ENCODE measurements at regions of chr11 and their contacts with region 1.

Region 1: DNA sequence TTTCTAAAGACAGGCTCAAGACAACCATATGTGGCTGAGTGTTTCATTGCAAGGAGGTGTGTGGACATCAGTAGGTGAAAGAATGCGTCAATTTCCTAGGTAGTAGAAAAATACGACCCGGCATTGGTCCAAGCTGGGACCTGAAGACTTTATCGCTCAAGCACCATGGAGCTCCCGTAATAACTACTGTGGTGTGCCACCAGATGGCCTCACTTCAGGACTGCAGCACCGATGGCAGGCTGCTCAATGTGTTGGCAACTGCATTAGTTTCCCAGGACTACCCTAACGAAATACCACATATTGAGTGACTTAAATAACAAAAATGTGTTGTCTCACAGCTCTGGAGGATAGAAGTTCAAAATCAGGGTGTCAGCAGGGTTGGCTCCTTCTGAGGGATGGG is 72.4 kb upstream of the FAT3 start:
- DNase-seq: peak; percentile 52
- ATAC-seq: peak; percentile 95
- H3K4me3 Mint-ChIP-seq: no peak overlapping the region
- H3K27ac Mint-ChIP-seq: no peak overlapping the region
- H3K4me1 Mint-ChIP-seq: peaks cover 24% of the 10 kb centered on the region
- H3K27me3 Mint-ChIP-seq: no peaks in the 10 kb centered on the region
- CTCF ChIP-seq: 0 out of 2 replicates have a peak, but pooled peaks have one; percentile 36

Region 2: GRCh38 chr11:92136797-92137196 is 15.4 kb before region 1 on chr11:
- CTCF ChIA-PET with region 1: interaction called, 11 read pairs
- POLR2A ChIA-PET with region 1: no interaction called
- DNase-seq: peak; percentile 20
- ATAC-seq: peak; percentile 94
- H3K4me3 Mint-ChIP-seq: no peak overlapping the region
- H3K27ac Mint-ChIP-seq: no peak overlapping the region
- H3K4me1 Mint-ChIP-seq: no peaks in the 10 kb centered on the region
- H3K27me3 Mint-ChIP-seq: no peaks in the 10 kb centered on the region
- CTCF ChIP-seq: no peak

Region 3: GRCh38 chr11:92168936-92169335 is 16.7 kb after region 1 on chr11:
- CTCF ChIA-PET with region 1: no interaction called
- POLR2A ChIA-PET with region 1: no interaction called
- DNase-seq: no peak
- ATAC-seq: no peak
- H3K4me3 Mint-ChIP-seq: no peak overlapping the region
- H3K27ac Mint-ChIP-seq: no peak overlapping the region
- H3K4me1 Mint-ChIP-seq: no peaks in the 10 kb centered on the region
- H3K27me3 Mint-ChIP-seq: peaks cover 3% of the 10 kb centered on the region; the same call in 1 of the 2 replicates
- CTCF ChIP-seq: no peak

Region 4: DNA sequence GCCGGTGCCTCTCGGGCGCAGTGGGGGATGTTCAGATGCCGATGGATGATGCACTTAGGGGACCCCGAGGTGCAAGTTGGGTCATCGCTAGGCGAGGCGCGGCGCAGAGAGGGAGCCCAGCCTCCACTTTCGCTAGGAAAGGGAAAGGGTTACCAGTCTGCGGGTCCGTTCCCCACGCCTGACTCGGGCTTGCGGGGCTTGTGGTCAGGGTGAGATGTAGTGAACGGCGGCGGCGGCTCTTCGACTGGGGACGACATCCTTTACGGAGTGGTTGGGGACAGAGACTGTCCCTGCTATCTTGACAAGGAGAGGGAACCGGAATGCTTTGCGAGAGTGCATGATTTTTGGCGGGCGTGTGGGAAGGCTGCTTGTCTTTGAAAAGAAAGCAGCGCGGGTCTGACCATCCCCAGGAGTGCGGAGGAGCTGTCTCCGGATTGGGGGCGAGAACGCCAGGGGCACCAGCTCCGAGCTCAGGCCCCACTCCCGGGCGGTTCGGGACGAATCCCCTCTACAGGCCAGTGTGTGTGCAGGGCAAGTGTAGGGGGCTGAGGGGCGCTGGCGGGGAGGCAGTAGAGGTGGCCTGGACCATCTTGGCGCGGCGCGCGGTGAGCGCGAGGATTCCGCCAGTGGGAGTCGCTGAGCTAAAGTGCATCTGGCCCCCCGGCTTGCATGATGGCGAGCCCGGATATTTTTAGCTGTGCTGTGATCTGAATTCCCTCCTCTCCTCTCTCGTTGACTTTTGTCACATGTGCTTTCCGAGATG is 73.5 kb after region 1 on chr11:
- CTCF ChIA-PET with region 1: interaction called, 14 read pairs
- POLR2A ChIA-PET with region 1: no interaction called
- DNase-seq: peak; percentile 54
- ATAC-seq: peak; percentile 15
- H3K4me3 Mint-ChIP-seq: peak overlapping the region; percentile 94
- H3K27ac Mint-ChIP-seq: peak overlapping the region; percentile 64
- H3K4me1 Mint-ChIP-seq: peaks cover 60% of the 10 kb centered on the region
- H3K27me3 Mint-ChIP-seq: peaks cover 52% of the 10 kb centered on the region
- CTCF ChIP-seq: no peak

Region 5: GRCh38 chr11:92886243-92886905 is 734.1 kb after region 1 on chr11:
- CTCF ChIA-PET with region 1: interaction called, 15 read pairs
- POLR2A ChIA-PET with region 1: no interaction called
- DNase-seq: peak; percentile 32
- ATAC-seq: peak; percentile 95
- H3K4me3 Mint-ChIP-seq: no peak overlapping the region
- H3K27ac Mint-ChIP-seq: no peak overlapping the region
- H3K4me1 Mint-ChIP-seq: no peaks in the 10 kb centered on the region
- H3K27me3 Mint-ChIP-seq: no peaks in the 10 kb centered on the region
- CTCF ChIP-seq: peak; percentile 52